MCF 10A (cell line): ENCODE measurements at regions of chr19 and their contacts with region 1.

Region 1: DNA sequence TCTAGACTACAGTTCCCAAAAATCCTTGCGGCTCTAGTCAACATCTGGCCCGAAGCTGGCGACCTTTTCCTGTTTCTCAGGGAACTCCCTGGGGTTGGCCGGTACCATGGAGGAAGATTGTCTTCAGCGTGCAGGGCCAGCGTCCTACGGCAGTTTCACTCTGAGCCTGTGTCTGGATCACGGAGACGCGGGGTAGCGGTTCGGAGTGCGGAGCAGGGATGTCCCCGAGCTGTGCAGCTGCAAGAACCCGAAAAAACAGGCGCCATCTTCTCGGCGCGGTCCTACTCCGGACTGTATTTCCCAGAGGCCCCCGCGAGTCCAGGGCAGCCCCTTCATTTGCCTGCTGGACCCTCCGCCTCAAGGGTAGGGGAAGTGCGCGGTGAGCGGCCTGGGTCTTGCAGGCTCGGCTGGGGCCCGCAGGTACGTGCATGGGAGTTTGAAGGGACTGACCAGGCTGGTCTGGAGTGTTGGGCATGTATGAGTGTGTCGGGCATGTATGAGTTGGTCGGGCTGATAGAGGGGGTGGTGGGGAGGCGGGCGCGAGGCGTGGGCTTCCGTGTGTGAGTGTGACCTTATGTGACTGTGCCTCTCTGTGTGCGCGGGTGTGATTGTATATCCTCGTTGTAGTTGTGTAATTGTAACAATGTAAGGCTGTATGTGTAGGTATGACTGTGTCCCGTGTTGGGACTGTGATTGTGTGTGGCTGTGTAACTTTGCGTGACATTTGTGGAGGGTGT is at the start of gene ZNF383:
- DNase-seq: peak; percentile 92
- H3K4me3 Mint-ChIP-seq: peak within 1 kb of the TSS; percentile 89
- H3K27ac Mint-ChIP-seq: peak within 1 kb of the TSS; percentile 90
- H3K4me1 Mint-ChIP-seq: peaks cover 21% of the 10 kb centered on the region
- H3K27me3 Mint-ChIP-seq: no peaks in the 10 kb centered on the region
- CTCF ChIP-seq: no peak
- total RNA-seq, gene ZNF383: 7.4 and 9.2 TPM in 2 replicates

Region 2: GRCh38 chr19:36665832-36666231 is 552.2 kb before region 1 on chr19:
- CTCF ChIA-PET with region 1: no interaction called
- POLR2A ChIA-PET with region 1: no interaction called
- intact Hi-C with region 1: loop called (anchors 10 kb)
- DNase-seq: no peak
- H3K4me3 Mint-ChIP-seq: peak overlapping the region; percentile 94
- H3K27ac Mint-ChIP-seq: peak overlapping the region; percentile 93
- H3K4me1 Mint-ChIP-seq: peaks cover 6% of the 10 kb centered on the region
- H3K27me3 Mint-ChIP-seq: no peaks in the 10 kb centered on the region
- CTCF ChIP-seq: no peak

Region 3: GRCh38 chr19:37077934-37078725 is 139.9 kb before region 1 on chr19 and contains the start of gene ZNF420:
- CTCF ChIA-PET with region 1: no interaction called
- POLR2A ChIA-PET with region 1: interaction called, 12 read pairs
- intact Hi-C with region 1: loop called (anchors 5 kb)
- DNase-seq: peak; percentile 93
- H3K4me3 Mint-ChIP-seq: peak within 1 kb of the TSS; percentile 95
- H3K27ac Mint-ChIP-seq: peak within 1 kb of the TSS; percentile 93
- H3K4me1 Mint-ChIP-seq: peaks cover 12% of the 10 kb centered on the region
- H3K27me3 Mint-ChIP-seq: no peaks in the 10 kb centered on the region
- CTCF ChIP-seq: no peak
- total RNA-seq, gene ZNF420: 9.0 and 11.0 TPM in 2 replicates

Region 4: GRCh38 chr19:37172368-37173366 is 45.4 kb before region 1 on chr19 and contains the start of gene ZNF585A:
- CTCF ChIA-PET with region 1: no interaction called
- POLR2A ChIA-PET with region 1: interaction called, 7 read pairs
- intact Hi-C with region 1: loop called (anchors 5 kb)
- DNase-seq: peak; percentile 96
- H3K4me3 Mint-ChIP-seq: no peak within 1 kb of the TSS
- H3K27ac Mint-ChIP-seq: no peak within 1 kb of the TSS
- H3K4me1 Mint-ChIP-seq: no peaks in the 10 kb centered on the region
- H3K27me3 Mint-ChIP-seq: no peaks in the 10 kb centered on the region
- CTCF ChIP-seq: peak; percentile 11
- total RNA-seq, gene ZNF585A: 6.1 and 10.4 TPM in 2 replicates

Region 5: GRCh38 chr19:37466798-37467607 is 249.0 kb after region 1 on chr19 and contains the start of gene ZNF569:
- CTCF ChIA-PET with region 1: no interaction called
- POLR2A ChIA-PET with region 1: interaction called, 4 read pairs
- intact Hi-C with region 1: loop called (anchors 5 kb)
- DNase-seq: peak; percentile 84
- H3K4me3 Mint-ChIP-seq: peak within 1 kb of the TSS; percentile 91
- H3K27ac Mint-ChIP-seq: peak within 1 kb of the TSS; percentile 72
- H3K4me1 Mint-ChIP-seq: no peaks in the 10 kb centered on the region
- H3K27me3 Mint-ChIP-seq: no peaks in the 10 kb centered on the region
- CTCF ChIP-seq: no peak
- total RNA-seq, gene ZNF569: 3.4 and 3.9 TPM in 2 replicates

Region 6: GRCh38 chr19:37513397-37513796 is 295.4 kb after region 1 on chr19:
- CTCF ChIA-PET with region 1: no interaction called
- POLR2A ChIA-PET with region 1: no interaction called
- intact Hi-C with region 1: no loop called
- DNase-seq: no peak
- H3K4me3 Mint-ChIP-seq: no peak overlapping the region
- H3K27ac Mint-ChIP-seq: no peak overlapping the region
- H3K4me1 Mint-ChIP-seq: no peaks in the 10 kb centered on the region
- H3K27me3 Mint-ChIP-seq: no peaks in the 10 kb centered on the region
- CTCF ChIP-seq: no peak

Region 7: DNA sequence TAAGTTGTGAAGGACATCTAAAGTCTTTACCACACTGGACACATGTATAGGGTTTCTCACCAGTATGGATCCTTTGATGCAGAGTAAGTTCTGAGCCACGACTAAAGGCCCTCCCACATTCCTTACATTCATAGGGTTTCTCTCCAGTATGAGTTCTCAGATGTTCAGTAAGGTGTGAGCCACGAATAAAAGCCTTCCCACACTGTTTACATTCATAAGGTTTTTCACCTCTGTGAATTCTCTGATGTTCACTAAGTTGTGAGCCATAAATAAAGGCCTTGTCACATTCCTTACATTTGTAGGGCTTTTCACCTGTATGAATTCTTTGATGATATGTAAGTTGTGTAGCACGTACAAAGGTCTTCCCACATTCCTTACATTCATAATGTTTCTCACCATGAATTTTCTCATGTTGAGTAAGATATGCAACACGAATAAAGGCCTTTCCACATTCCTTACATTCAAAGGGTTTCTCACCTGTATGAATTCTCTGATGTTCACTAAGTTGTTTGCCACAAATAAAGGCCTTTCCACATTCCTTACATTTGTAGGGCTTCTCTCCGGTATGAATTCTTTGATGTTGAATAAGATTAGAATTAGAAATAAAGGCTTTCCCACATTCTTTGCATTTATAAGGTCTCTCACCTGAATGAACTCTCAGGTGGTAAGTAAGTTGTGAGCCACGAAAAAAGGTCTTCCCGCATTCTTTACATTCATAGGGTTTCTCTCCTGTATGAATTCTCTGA is 346.8 kb after region 1 on chr19:
- CTCF ChIA-PET with region 1: no interaction called
- POLR2A ChIA-PET with region 1: no interaction called
- intact Hi-C with region 1: no loop called
- DNase-seq: peak; percentile 2
- H3K4me3 Mint-ChIP-seq: no peak overlapping the region
- H3K27ac Mint-ChIP-seq: no peak overlapping the region
- H3K4me1 Mint-ChIP-seq: no peaks in the 10 kb centered on the region
- H3K27me3 Mint-ChIP-seq: no peaks in the 10 kb centered on the region
- CTCF ChIP-seq: no peak